Heart right ventricle (tissue), 16 donors: ENCODE measurements at regions of chr14 and their contacts with region 1.

Region 1: GRCh38 chr14:100108042-100108825 is 43.0 kb downstream of the EVL start:
- DNase-seq: peak; percentile 88 to 89
- ATAC-seq: peak; percentile 83 to 90 (median 86)
- H3K4me3 ChIP-seq: no peak overlapping the region
- H3K27ac ChIP-seq: peak overlapping the region in 9 of 10 donors; percentile 11 to 84 (median 40)
- H3K4me1 ChIP-seq: peaks cover 26 to 69% (median 59%) of the 10 kb centered on the region in 9 donors
- H3K27me3 ChIP-seq: no peaks in the 10 kb centered on the region
- CTCF ChIP-seq: peak; percentile 87 to 97 (median 93)

Region 2: DNA sequence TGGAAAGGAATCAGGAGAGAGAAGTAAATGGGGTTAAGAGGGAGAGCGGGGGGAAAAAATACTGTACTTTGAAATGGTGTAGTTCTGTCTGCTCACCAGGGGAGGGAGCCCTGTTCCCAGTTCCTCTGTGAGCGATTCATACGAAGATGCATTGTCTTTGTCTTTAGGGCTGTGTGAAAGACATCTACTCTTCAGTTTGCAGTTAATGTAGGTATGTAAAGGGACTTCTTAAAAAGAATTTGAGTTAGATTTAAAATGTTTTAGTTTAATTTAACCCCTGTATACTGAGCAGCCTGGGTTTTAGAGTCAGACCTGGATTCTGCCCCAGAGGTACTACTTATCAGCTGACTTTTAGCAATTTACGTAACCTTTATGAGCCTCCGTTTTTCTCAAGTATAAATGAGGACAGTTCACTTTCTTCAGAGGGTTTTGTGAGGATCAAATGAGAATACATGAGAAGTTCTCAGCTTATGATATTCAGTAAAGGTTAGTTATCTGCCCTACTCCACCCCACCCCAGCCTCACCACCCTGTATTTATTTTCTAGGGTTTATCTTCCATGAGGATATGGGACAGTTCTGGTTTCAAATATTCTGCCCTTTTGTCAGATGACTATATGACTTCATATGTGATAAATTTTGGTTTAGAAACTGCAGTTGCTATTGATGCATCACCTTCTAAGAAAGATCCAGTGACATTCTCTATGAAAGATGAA is 125.5 kb before region 1 on chr14:
- intact Hi-C with region 1: loop called (anchors 1 to 5 kb)
- DNase-seq: peak in 1 of 2 donors; percentile 50
- ATAC-seq: peak in 7 of 8 donors; percentile 76 to 92 (median 87)
- H3K4me3 ChIP-seq: no peak overlapping the region
- H3K27ac ChIP-seq: no peak overlapping the region
- H3K4me1 ChIP-seq: peaks cover 0 to 22% (median 10%) of the 10 kb centered on the region in 9 donors
- H3K27me3 ChIP-seq: no peaks in the 10 kb centered on the region
- CTCF ChIP-seq: peak; percentile 75 to 93 (median 89)

Region 3: DNA sequence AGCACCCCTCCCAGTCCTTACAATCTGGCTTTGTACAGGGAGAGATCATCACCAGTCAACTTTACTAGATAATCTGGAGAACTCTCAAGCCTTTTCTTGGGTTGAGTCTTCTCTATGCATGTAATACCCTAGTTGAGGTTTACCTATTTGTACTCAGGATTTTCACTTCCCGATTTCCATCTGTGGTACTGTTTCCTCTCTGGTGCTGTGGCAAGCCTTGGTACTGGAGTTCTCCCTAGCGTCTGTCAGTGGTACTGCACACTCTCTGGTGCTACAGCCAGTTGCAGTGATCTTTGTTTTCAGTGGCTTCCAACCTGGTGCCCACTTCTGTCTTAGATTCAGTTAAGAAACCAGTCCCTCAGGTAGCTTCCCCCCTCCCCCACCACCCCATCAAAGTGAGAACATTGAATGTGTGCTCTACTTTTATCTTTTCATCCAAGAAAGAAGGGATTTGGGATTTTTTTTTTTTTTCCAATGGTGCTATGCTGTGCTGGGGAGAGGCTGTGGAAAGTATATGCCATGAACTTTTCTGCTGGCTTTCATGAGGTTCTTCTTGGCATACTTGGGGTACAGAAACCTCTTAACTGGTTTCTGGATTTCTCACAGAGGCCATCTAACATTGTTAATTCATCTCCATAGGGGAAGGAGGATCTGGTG is 112.4 kb before region 1 on chr14:
- intact Hi-C with region 1: loop called in 2 of 10 experiments (anchors 5 kb)
- DNase-seq: peak in 1 of 2 donors; percentile 58
- ATAC-seq: peak in 5 of 8 donors; percentile 41 to 89 (median 62)
- H3K4me3 ChIP-seq: no peak overlapping the region
- H3K27ac ChIP-seq: no peak overlapping the region
- H3K4me1 ChIP-seq: peaks cover 0 to 2% (median 0%) of the 10 kb centered on the region in 9 donors
- H3K27me3 ChIP-seq: no peaks in the 10 kb centered on the region
- CTCF ChIP-seq: peak; percentile 56 to 85 (median 71)

Region 4: GRCh38 chr14:100056964-100057795 is 51.1 kb before region 1 on chr14:
- intact Hi-C with region 1: loop called in 4 of 10 experiments (anchors 1 to 10 kb)
- DNase-seq: no peak
- ATAC-seq: peak in 7 of 8 donors; percentile 33 to 78 (median 68)
- H3K4me3 ChIP-seq: no peak overlapping the region
- H3K27ac ChIP-seq: peak overlapping the region in 6 of 10 donors; percentile 12 to 54 (median 42)
- H3K4me1 ChIP-seq: peaks cover 0 to 40% (median 17%) of the 10 kb centered on the region in 9 donors
- H3K27me3 ChIP-seq: no peaks in the 10 kb centered on the region
- CTCF ChIP-seq: peak in 7 of 9 donors; percentile 14 to 51 (median 40)

Region 5: GRCh38 chr14:100201701-100202100 is 93.5 kb after region 1 on chr14:
- intact Hi-C with region 1: no loop called
- DNase-seq: no peak
- ATAC-seq: no peak
- H3K4me3 ChIP-seq: no peak overlapping the region
- H3K27ac ChIP-seq: no peak overlapping the region
- H3K4me1 ChIP-seq: no peaks in the 10 kb centered on the region
- H3K27me3 ChIP-seq: no peaks in the 10 kb centered on the region
- CTCF ChIP-seq: no peak